ENCODE measurements at regions of chr2 and their contacts with region 1.

Region 1: GRCh38 chr2:210195101-210195852 is 24.1 kb upstream of the KANSL1L start:
- DNase-seq: peak in 1 of 2 donors; percentile 19
- ATAC-seq: peak in 4 of 8 donors; percentile 43 to 68 (median 58)
- H3K4me3 ChIP-seq: peak overlapping the region in 8 of 10 donors; percentile 1 to 44 (median 36)
- H3K27ac ChIP-seq: no peak overlapping the region
- H3K4me1 ChIP-seq: peaks cover 0 to 11% (median 0%) of the 10 kb centered on the region in 9 donors
- H3K27me3 ChIP-seq: no peaks in the 10 kb centered on the region
- CTCF ChIP-seq: peak; percentile 52 to 88 (median 73)

Region 2: GRCh38 chr2:209322041-209322440 is 873.2 kb before region 1 on chr2:
- intact Hi-C with region 1: loop called in 2 of 10 experiments (anchors 10 kb)
- DNase-seq: no peak
- ATAC-seq: no peak
- H3K4me3 ChIP-seq: no peak overlapping the region
- H3K27ac ChIP-seq: no peak overlapping the region
- H3K4me1 ChIP-seq: no peaks in the 10 kb centered on the region
- H3K27me3 ChIP-seq: peaks cover 0 to 5% (median 0%) of the 10 kb centered on the region in 7 donors
- CTCF ChIP-seq: peak in 1 of 9 donors; percentile 12

Region 3: GRCh38 chr2:209977386-209978239 is 217.7 kb before region 1 on chr2:
- intact Hi-C with region 1: loop called (anchors 1 to 5 kb)
- DNase-seq: no peak
- ATAC-seq: peak in 2 of 8 donors; percentile 33 to 54
- H3K4me3 ChIP-seq: no peak overlapping the region
- H3K27ac ChIP-seq: no peak overlapping the region
- H3K4me1 ChIP-seq: no peaks in the 10 kb centered on the region
- H3K27me3 ChIP-seq: peaks cover 0 to 9% (median 0%) of the 10 kb centered on the region in 7 donors
- CTCF ChIP-seq: peak; percentile 25 to 81 (median 69)

Region 4: GRCh38 chr2:209990838-209991237 is 204.4 kb before region 1 on chr2:
- intact Hi-C with region 1: loop called in 1 of 10 experiments (anchors 5 kb)
- DNase-seq: no peak
- ATAC-seq: no peak
- H3K4me3 ChIP-seq: no peak overlapping the region
- H3K27ac ChIP-seq: no peak overlapping the region
- H3K4me1 ChIP-seq: peaks cover 0 to 10% (median 0%) of the 10 kb centered on the region in 9 donors
- H3K27me3 ChIP-seq: peaks cover 0 to 14% (median 0%) of the 10 kb centered on the region in 7 donors
- CTCF ChIP-seq: no peak

Region 5: GRCh38 chr2:210063306-210063705 is 132.0 kb before region 1 on chr2:
- intact Hi-C with region 1: loop called in 2 of 10 experiments (anchors 1 to 10 kb)
- DNase-seq: no peak
- ATAC-seq: no peak
- H3K4me3 ChIP-seq: no peak overlapping the region
- H3K27ac ChIP-seq: no peak overlapping the region
- H3K4me1 ChIP-seq: no peaks in the 10 kb centered on the region
- H3K27me3 ChIP-seq: no peaks in the 10 kb centered on the region
- CTCF ChIP-seq: no peak

Region 6: DNA sequence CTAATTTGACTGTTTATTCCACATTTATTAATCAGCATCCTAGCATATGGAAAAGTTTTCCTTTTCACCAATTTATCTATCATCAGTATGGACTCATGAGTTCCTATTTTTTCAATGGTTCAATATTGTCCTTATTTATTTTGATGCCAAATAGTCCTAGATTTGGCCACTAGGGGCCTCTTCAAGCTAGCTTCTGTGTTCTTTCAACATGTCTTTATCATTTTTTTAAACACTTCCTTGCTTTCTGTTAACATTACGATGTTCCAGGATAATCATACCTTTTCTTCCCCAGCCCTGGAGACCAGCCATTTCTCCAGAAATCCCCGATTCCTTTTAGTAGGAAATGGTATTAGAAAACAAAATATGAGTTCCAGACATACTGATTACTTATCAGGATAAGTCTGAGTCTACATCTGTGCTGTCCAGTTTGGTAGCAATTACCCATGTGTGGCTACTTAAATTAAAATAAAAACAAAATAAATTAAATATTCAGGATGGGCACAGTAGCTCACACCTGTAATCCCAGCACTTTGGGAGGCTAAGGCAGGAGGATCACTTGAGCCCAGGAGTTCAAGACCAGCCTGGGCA is 122.3 kb before region 1 on chr2:
- intact Hi-C with region 1: loop called in 8 of 10 experiments (anchors 1 to 10 kb)
- DNase-seq: no peak
- ATAC-seq: no peak
- H3K4me3 ChIP-seq: no peak overlapping the region
- H3K27ac ChIP-seq: no peak overlapping the region
- H3K4me1 ChIP-seq: peaks cover 0 to 5% (median 0%) of the 10 kb centered on the region in 9 donors
- H3K27me3 ChIP-seq: no peaks in the 10 kb centered on the region
- CTCF ChIP-seq: peak in 8 of 9 donors; percentile 23 to 68 (median 61)

Measured in heart right ventricle (tissue), 16 donors.